GM12878 (cell line): ENCODE measurements at regions of chr11 and their contacts with region 1.

Region 1: DNA sequence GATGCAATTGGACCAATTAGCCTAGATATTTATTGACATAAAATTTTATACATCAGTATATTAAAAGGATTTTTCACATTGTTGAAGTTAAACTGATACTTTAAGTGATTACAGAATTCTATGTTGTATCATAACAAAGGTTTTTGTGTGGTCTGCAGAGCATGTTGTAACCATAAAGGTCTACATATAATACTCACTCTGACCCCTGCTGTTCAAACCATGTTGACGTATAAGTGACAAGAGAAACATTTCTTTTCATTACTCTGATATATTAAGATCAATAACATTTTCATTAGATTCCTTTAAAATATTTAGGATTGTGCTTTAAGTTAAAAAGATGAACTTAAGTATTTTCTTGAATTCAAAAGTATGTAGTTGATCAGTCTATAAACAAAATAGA is 63.9 kb downstream of the GAS2 start:
- DNase-seq: no peak
- ATAC-seq: peak; percentile 88
- H3K4me3 ChIP-seq: no peak overlapping the region
- H3K27ac ChIP-seq: no peak overlapping the region
- H3K4me1 ChIP-seq: no peaks in the 10 kb centered on the region
- H3K27me3 ChIP-seq: no peaks in the 10 kb centered on the region
- CTCF ChIP-seq: peak; percentile 4 to 53 (median 9); a peak in 2 of 6 replicates
- EP300 ChIP-seq: no peak
- POLR2A ChIP-seq: no peak
- RAD21 ChIP-seq: peak; percentile 58

Region 2: GRCh38 chr11:22633354-22633902 is 96.9 kb before region 1 on chr11:
- CTCF ChIA-PET with region 1: interaction called, 5 read pairs
- POLR2A ChIA-PET with region 1: no interaction called
- RAD21 ChIA-PET with region 1: interaction called, 3 read pairs
- SMC1A ChIA-PET with region 1: interaction called, 14 read pairs
- in situ Hi-C with region 1: no loop called
- intact Hi-C with region 1: no loop called
- DNase-seq: no peak
- ATAC-seq: peak; percentile 31; the same call in 2 of the 3 replicates
- H3K4me3 ChIP-seq: no peak overlapping the region
- H3K27ac ChIP-seq: no peak overlapping the region
- H3K4me1 ChIP-seq: no peaks in the 10 kb centered on the region
- H3K27me3 ChIP-seq: no peaks in the 10 kb centered on the region
- CTCF ChIP-seq: no peak
- EP300 ChIP-seq: no peak
- POLR2A ChIP-seq: no peak
- RAD21 ChIP-seq: no peak

Region 3: DNA sequence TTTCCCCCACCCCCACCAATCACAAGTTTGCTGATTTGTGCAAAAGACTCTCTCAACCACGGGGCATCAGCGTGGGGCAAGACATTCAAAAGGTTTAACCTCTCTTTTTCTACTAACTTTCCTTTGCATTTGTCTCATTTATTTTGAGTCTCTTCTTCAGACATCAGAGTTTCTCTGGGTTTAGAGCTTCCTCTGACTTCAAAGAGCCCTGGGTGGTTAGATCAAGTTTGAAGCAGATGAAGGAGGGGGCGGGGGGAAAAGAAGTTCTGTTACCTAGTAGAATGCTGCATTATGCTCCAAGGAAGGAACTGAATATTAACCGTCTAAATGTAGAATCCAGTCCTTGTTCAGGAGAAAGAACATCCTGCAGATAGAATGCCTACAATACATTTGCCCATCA is 39.4 kb before region 1 on chr11:
- CTCF ChIA-PET with region 1: interaction called, 4 read pairs
- POLR2A ChIA-PET with region 1: interaction called, 7 read pairs
- RAD21 ChIA-PET with region 1: interaction called, 3 read pairs
- SMC1A ChIA-PET with region 1: interaction called, 10 read pairs
- in situ Hi-C with region 1: no loop called
- intact Hi-C with region 1: no loop called
- DNase-seq: no peak
- ATAC-seq: peak; percentile 32
- H3K4me3 ChIP-seq: no peak overlapping the region
- H3K27ac ChIP-seq: no peak overlapping the region
- H3K4me1 ChIP-seq: no peaks in the 10 kb centered on the region
- H3K27me3 ChIP-seq: no peaks in the 10 kb centered on the region
- CTCF ChIP-seq: no peak
- EP300 ChIP-seq: no peak
- POLR2A ChIP-seq: no peak
- RAD21 ChIP-seq: no peak

Region 4: DNA sequence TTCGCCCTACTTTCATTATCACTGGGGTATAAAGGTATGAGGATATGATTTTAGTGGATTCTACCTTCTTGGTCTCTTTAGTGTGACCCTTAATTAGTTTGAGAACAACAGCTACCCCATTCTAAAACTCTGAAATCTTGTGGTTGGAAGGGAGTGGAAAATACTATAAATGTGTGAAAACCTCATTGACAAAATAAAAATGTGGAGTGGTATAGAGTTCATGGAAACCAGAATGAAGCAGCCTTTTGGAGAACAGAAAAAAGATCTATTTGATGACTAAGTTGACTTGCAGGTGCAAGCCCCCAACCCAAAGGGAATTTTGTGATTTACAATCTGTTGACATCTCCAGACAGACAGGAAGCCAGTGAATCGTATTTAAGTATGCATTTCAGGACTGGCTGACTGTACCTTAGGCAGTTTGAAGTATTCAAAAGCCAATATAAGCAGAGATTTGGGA is 11.9 kb after region 1 on chr11:
- CTCF ChIA-PET with region 1: interaction called, 4 read pairs
- POLR2A ChIA-PET with region 1: interaction called, 4 read pairs
- RAD21 ChIA-PET with region 1: interaction called, 14 read pairs
- SMC1A ChIA-PET with region 1: interaction called, 12 read pairs
- in situ Hi-C with region 1: no loop called
- intact Hi-C with region 1: no loop called
- DNase-seq: no peak
- ATAC-seq: peak; percentile 90
- H3K4me3 ChIP-seq: no peak overlapping the region
- H3K27ac ChIP-seq: no peak overlapping the region
- H3K4me1 ChIP-seq: no peaks in the 10 kb centered on the region
- H3K27me3 ChIP-seq: no peaks in the 10 kb centered on the region
- CTCF ChIP-seq: no peak
- EP300 ChIP-seq: peak in 1 of 2 experiments; percentile 54; a peak in 1 of 4 replicates
- POLR2A ChIP-seq: no peak
- RAD21 ChIP-seq: no peak

Region 5: GRCh38 chr11:23359297-23359696 is 629.0 kb after region 1 on chr11:
- CTCF ChIA-PET with region 1: no interaction called
- POLR2A ChIA-PET with region 1: no interaction called
- RAD21 ChIA-PET with region 1: no interaction called
- SMC1A ChIA-PET with region 1: no interaction called
- in situ Hi-C with region 1: no loop called
- intact Hi-C with region 1: no loop called
- DNase-seq: no peak
- ATAC-seq: 0 out of 3 replicates have a peak, but pooled peaks have one; percentile 37
- H3K4me3 ChIP-seq: no peak overlapping the region
- H3K27ac ChIP-seq: no peak overlapping the region
- H3K4me1 ChIP-seq: no peaks in the 10 kb centered on the region
- H3K27me3 ChIP-seq: no peaks in the 10 kb centered on the region
- CTCF ChIP-seq: no peak
- EP300 ChIP-seq: no peak
- POLR2A ChIP-seq: no peak
- RAD21 ChIP-seq: no peak